PC-3 (cell line): ENCODE measurements at regions of chr1 and their contacts with region 1.

Region 1: DNA sequence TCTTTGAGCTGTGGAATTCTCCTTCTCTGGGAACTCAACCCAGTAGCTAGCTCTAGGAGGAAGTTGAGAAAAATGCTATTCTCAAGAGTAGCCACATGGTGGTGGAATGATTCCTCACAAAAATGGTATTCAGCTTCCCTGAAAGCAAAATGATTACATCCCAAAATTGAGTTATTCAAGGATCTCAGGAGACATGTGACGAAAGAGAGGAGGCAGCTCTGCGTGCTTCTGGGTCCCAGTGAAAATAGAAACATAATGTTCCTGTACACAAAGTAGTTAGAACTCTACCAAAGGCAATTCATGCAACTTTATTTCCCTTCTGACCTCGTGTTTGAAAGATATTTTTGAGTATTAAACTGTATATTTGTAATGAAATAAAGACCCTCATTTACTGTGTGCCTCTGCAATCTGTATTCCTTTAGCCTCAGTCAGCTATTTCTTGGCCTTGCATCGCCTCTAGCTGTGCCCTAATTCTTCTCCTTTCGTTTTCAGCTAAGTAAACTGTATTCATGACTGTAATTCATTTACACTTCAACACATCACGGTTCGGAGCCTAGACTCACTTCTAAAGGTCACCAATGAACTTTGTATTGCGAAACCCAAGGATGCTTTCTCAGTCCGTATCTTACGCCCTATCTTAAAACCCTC is 167.3 kb downstream of the FASLG start:
- DNase-seq: peak; percentile 99
- ATAC-seq: peak; percentile 86
- H3K4me3 ChIP-seq: no peak overlapping the region
- H3K27ac ChIP-seq: no peak overlapping the region
- H3K4me1 ChIP-seq: peaks cover 11% of the 10 kb centered on the region
- H3K27me3 ChIP-seq: no peaks in the 10 kb centered on the region
- CTCF ChIP-seq: peak; percentile 100

Region 2: DNA sequence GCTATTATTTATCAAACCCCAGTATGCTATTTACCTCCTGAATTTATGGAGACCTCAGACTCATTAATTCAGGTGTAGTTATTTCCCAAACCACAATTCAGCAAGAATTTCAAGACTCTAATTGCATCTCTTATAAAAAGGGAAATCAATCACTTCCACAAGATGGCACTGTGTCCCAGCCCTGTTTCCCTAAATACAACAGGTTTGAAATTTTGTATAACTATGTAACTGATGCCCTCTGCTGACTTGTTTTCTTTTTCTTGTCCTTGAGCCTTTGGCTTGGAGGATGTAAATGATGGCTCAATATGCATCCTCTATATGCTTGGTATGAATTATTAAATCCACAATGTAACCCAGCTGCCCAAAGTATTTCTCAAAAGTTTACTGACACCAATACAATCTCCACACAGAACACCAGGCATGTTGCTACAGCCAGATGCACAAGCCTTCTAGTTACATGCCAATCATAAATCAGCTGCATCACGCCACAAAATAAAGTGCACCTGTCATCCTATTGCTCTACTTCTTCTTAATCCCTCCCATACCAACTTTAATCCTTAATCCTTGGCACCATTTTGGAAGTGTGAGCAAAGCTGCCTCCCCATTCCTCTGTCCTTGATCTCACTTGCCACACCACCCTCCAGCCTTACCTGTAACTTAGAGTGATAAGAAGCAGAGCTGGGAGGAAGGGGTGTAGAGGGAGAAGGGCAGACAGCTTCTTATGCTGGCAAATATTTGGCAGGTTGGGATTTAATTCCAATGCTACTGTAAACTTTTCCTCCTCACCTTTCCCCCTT is 396.7 kb before region 1 on chr1:
- CTCF ChIA-PET with region 1: no interaction called
- POLR2A ChIA-PET with region 1: no interaction called
- intact Hi-C with region 1: loop called (anchors 10 kb)
- DNase-seq: peak; percentile 99
- ATAC-seq: peak; percentile 76
- H3K4me3 ChIP-seq: no peak overlapping the region
- H3K27ac ChIP-seq: no peak overlapping the region
- H3K4me1 ChIP-seq: peaks cover 20% of the 10 kb centered on the region
- H3K27me3 ChIP-seq: no peaks in the 10 kb centered on the region
- CTCF ChIP-seq: peak; percentile 100

Region 3: DNA sequence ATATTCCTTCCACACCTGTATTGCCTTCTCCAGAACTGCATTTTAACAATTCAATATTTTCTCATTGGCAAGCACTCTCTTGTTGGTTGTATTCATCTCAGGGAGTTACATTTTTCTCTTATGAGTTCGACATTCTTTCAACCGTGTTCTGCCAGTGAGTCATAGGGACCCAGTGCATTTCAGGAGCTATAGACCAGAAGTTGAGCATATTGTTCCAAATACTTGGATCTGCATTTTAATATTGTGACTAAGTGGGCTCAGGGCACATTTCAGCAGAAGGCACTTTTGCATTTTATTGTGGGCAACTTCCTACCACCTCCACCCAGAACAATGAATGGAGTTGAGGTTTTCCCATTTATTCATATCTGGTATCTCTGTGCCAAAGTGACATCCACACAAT is 91.8 kb after region 1 on chr1:
- CTCF ChIA-PET with region 1: interaction called, 4 read pairs
- POLR2A ChIA-PET with region 1: interaction called, 4 read pairs
- intact Hi-C with region 1: loop called (anchors 1 kb)
- DNase-seq: peak; percentile 100
- ATAC-seq: peak; percentile 89
- H3K4me3 ChIP-seq: peak overlapping the region; percentile 4; the same call in 1 of the 2 replicates
- H3K27ac ChIP-seq: peak overlapping the region; percentile 72
- H3K4me1 ChIP-seq: peaks cover 63% of the 10 kb centered on the region
- H3K27me3 ChIP-seq: no peaks in the 10 kb centered on the region
- CTCF ChIP-seq: no peak

Region 4: DNA sequence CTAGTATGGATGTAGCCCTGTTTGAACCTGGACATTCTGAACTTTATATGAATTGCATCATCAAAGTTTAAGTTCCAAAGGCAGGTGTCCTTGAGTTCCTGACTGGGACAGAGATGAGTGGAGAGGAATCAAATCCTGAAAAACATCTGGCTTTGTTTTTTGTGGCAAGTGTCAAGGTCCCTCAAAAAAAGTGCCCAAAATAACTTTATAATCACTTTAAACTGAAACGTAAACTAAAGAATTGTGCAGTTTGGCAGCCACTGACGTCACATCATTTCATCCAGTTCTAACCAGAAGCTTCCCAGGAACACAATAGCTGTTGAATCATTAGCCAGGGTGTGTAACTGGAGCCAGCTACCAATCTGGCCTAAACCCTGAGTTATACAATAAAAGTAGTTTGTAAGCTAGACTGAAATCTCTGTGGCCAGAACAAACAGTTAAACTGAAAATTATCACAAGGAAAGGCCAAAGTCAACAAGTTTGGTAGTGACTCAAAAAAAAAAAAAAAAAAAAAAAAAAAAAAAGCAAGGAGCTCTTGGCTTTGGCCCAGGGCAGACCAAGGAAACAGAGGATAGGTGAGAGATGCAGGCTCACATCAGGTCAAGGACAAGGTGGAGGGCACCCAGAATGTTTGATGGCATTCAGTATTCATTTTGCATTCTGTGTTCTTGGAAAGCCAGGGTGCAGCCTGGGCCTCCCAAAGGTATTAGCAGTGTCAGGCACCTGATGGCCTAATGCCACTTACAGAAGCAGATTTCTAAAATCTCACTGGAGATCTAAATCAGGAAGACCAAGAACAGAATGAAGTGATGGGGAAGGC is 150.2 kb after region 1 on chr1:
- CTCF ChIA-PET with region 1: interaction called, 6 read pairs
- POLR2A ChIA-PET with region 1: no interaction called
- intact Hi-C with region 1: loop called (anchors 1 kb)
- DNase-seq: peak; percentile 100
- ATAC-seq: peak; percentile 99
- H3K4me3 ChIP-seq: peak overlapping the region; percentile 1; the same call in 1 of the 2 replicates
- H3K27ac ChIP-seq: peak overlapping the region; percentile 71
- H3K4me1 ChIP-seq: peaks cover 30% of the 10 kb centered on the region
- H3K27me3 ChIP-seq: no peaks in the 10 kb centered on the region
- CTCF ChIP-seq: no peak

Region 5: GRCh38 chr1:173062156-173062938 is 236.1 kb after region 1 on chr1:
- CTCF ChIA-PET with region 1: interaction called, 4 read pairs
- POLR2A ChIA-PET with region 1: no interaction called
- intact Hi-C with region 1: loop called (anchors 1 kb)
- DNase-seq: peak; percentile 100
- ATAC-seq: peak; percentile 100
- H3K4me3 ChIP-seq: no peak overlapping the region
- H3K27ac ChIP-seq: peak overlapping the region; percentile 43
- H3K4me1 ChIP-seq: peaks cover 36% of the 10 kb centered on the region
- H3K27me3 ChIP-seq: no peaks in the 10 kb centered on the region
- CTCF ChIP-seq: no peak

Region 6: DNA sequence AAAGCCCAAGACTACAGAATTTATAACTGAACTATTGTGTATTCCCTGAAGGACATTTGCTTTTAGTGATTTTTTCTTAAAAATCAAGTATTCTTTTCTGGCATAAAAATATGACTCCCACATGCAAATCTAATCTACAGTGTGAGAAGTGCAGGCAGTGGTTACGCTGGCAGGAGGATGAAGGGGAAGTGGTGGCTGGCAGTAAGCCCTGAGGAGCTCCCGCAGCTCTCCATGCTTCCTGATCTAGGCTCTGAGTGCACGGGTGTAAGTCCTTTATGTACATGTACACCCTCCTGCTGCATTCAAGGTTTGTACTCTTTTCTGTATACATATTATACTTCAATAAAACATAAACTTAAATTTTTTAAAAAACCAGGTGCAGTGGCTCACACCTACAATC is 583.4 kb after region 1 on chr1:
- CTCF ChIA-PET with region 1: interaction called, 8 read pairs
- POLR2A ChIA-PET with region 1: no interaction called
- intact Hi-C with region 1: loop called (anchors 2 kb)
- DNase-seq: peak; percentile 94
- ATAC-seq: peak; percentile 72
- H3K4me3 ChIP-seq: no peak overlapping the region
- H3K27ac ChIP-seq: peak overlapping the region; percentile 9; the same call in 1 of the 2 replicates
- H3K4me1 ChIP-seq: peaks cover 49% of the 10 kb centered on the region
- H3K27me3 ChIP-seq: no peaks in the 10 kb centered on the region
- CTCF ChIP-seq: no peak